HepG2 (cell line): ENCODE measurements at regions of chr1 and their contacts with region 1.

Region 1: DNA sequence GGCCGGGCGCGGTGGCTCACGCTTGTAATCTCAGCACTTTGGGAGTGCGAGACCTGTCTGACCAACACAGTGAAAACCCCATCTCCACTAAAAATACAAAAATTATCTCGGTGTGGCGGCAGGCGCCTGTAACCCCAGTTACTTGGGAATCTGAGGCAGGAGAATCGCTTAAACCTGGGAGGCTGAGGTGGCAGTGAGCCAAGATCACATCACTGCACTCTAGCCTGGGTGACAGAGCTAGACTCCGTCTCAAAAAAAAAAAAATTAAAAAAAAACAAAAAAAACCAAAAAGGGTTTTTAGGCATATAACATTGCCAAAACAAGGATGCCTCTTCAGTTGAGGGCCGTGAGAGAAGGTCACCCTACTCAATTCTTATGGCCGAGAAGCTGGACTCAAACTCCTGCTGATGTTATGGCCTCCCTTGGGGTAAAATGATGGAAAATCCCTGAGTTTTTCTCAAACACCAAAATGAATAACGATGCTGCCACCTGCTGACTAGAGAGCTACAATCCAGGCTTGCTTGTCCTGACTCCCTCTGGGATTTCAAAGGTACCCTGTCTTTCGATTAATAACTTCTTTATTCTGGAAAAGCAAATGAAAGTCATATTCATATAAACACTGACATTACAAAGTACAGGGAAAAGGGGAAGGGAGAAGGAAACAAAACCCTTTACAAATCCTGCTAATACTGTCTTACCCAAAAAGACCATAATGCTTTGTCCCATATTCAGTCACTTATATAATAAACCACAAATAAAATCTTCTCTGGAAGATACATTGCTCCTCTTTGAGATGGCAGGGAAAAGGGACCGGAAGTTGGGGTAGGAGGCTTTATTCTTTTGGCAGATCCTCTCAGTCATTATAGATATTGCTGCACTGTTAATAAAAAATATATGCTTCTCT is 10.7 kb downstream of the RAB42 start:
- DNase-seq: peak; percentile 81
- ATAC-seq: peak; percentile 55
- H3K4me3 ChIP-seq: no peak overlapping the region
- H3K27ac ChIP-seq: no peak overlapping the region
- H3K4me1 ChIP-seq: peaks cover 40% of the 10 kb centered on the region
- H3K27me3 ChIP-seq: no peaks in the 10 kb centered on the region
- CTCF ChIP-seq: peak; percentile 85
- EP300 ChIP-seq: 0 out of 4 replicates have a peak, but pooled peaks of 1 of the 2 experiments have one; percentile 20
- POLR2A ChIP-seq: no peak
- RAD21 ChIP-seq: peak; percentile 78

Region 2: GRCh38 chr1:28359592-28360239 is 243.1 kb before region 1 on chr1:
- CTCF ChIA-PET with region 1: no interaction called
- POLR2A ChIA-PET with region 1: no interaction called
- in situ Hi-C with region 1: no loop called
- intact Hi-C with region 1: loop called (anchors 5 kb)
- DNase-seq: peak; percentile 52
- ATAC-seq: peak; percentile 50
- H3K4me3 ChIP-seq: no peak overlapping the region
- H3K27ac ChIP-seq: no peak overlapping the region
- H3K4me1 ChIP-seq: peaks cover 9% of the 10 kb centered on the region; the same call in 1 of the 2 replicates
- H3K27me3 ChIP-seq: no peaks in the 10 kb centered on the region
- CTCF ChIP-seq: peak; percentile 71
- EP300 ChIP-seq: no peak
- POLR2A ChIP-seq: no peak
- RAD21 ChIP-seq: peak; percentile 27; the same call in 1 of the 2 replicates

Region 3: DNA sequence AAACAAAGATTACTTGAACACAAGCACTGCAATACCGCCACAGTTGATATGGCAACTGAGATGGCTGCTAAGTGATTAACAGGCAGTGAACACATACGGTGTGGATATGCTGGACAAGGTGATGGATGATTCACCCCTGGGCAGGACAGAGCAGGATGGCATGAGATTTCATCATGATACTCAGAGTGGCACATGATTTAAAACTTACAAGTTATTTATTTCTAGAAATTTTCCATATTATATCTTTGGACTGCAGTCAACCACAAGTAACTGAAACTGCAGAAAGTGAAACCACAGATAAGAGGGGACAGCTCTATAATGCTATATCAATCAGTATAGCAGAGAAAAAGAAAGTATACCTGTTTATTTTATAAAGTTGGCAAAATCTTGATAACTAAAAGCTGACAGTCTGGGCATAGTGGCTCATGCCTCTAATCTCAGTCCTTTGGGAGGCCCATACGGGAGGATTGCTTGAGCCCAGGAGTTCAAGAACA is 185.3 kb before region 1 on chr1:
- CTCF ChIA-PET with region 1: no interaction called
- POLR2A ChIA-PET with region 1: no interaction called
- in situ Hi-C with region 1: loop called (anchors 25 kb)
- intact Hi-C with region 1: no loop called
- DNase-seq: no peak
- ATAC-seq: no peak
- H3K4me3 ChIP-seq: no peak overlapping the region
- H3K27ac ChIP-seq: no peak overlapping the region
- H3K4me1 ChIP-seq: peaks cover 29% of the 10 kb centered on the region
- H3K27me3 ChIP-seq: no peaks in the 10 kb centered on the region
- CTCF ChIP-seq: no peak
- EP300 ChIP-seq: no peak
- POLR2A ChIP-seq: no peak
- RAD21 ChIP-seq: no peak

Region 4: DNA sequence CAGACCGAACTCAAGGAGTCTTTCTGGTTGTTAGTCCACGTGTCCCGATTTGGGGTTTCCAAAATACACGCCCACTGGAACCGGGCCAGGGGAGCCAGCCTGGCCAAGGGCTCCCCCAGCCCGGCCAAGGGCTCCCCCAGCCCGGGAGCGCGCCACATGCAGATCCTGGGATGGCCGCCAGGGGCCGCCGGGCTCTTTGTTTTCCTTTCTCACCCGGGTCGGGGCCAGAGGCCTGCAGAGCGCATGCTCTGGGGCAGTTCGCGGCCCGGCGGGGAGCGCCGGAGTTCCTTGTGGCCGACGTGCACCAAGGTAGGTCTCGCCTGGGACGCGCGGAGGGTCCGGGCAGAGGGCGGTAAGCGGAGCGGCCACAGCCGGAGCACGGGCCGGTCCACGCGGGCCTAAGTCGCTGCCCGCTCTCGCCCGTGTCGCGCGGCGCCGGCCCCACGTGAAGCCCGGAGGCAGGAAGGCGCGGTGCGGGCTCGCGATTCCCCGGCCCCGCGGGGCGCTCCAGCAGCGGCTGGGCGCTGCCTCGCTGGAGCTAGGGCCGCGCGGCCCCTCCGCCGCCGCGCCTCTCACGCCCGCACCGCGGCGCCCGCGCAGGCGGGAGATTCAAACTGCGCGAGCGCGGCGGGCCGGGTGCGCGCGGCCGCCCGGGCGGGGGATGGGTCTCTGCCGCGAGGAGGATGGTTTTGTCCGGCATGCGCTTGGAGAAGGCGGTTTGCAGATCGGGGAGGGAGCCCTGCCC is 84.6 kb before region 1 on chr1:
- CTCF ChIA-PET with region 1: interaction called, 27 read pairs
- POLR2A ChIA-PET with region 1: interaction called, 7 read pairs
- in situ Hi-C with region 1: loop called (anchors 5 kb)
- intact Hi-C with region 1: loop called (anchors 1 kb)
- DNase-seq: peak; percentile 76
- ATAC-seq: peak; percentile 45
- H3K4me3 ChIP-seq: peak overlapping the region; percentile 66 to 85 (median 75)
- H3K27ac ChIP-seq: peak overlapping the region; percentile 91
- H3K4me1 ChIP-seq: peaks cover 31% of the 10 kb centered on the region
- H3K27me3 ChIP-seq: no peaks in the 10 kb centered on the region
- CTCF ChIP-seq: peak; percentile 92
- EP300 ChIP-seq: 0 out of 4 replicates have a peak, but pooled peaks of 1 of the 2 experiments have one; percentile 6
- POLR2A ChIP-seq: peak; percentile 47 to 86; a peak in 3 of 4 replicates
- RAD21 ChIP-seq: peak; percentile 87

Region 5: GRCh38 chr1:28877132-28877781 is 274.5 kb after region 1 on chr1:
- CTCF ChIA-PET with region 1: no interaction called
- POLR2A ChIA-PET with region 1: no interaction called
- in situ Hi-C with region 1: no loop called
- intact Hi-C with region 1: no loop called
- DNase-seq: peak; percentile 62
- ATAC-seq: peak; percentile 76
- H3K4me3 ChIP-seq: no peak overlapping the region
- H3K27ac ChIP-seq: no peak overlapping the region
- H3K4me1 ChIP-seq: peaks cover 34% of the 10 kb centered on the region
- H3K27me3 ChIP-seq: no peaks in the 10 kb centered on the region; a peak in 1 of 5 replicates
- CTCF ChIP-seq: peak; percentile 98
- EP300 ChIP-seq: no peak
- POLR2A ChIP-seq: no peak
- RAD21 ChIP-seq: peak; percentile 92